Right cardiac atrium (tissue), 5 donors: ENCODE measurements at regions of chr12 and their contacts with region 1.

Region 1: GRCh38 chr12:92561543-92561899 is 141.3 kb upstream of the PLEKHG7 start:
- DNase-seq: peak in 1 of 3 donors; percentile 38
- ATAC-seq: peak; percentile 85 to 90
- H3K4me3 ChIP-seq: no peak overlapping the region
- H3K27ac ChIP-seq: no peak overlapping the region
- H3K4me1 ChIP-seq: peaks cover 2% of the 10 kb centered on the region
- H3K27me3 ChIP-seq: no peaks in the 10 kb centered on the region

Region 2: GRCh38 chr12:91577586-91578539 is 983.7 kb before region 1 on chr12:
- intact Hi-C with region 1: loop called in 1 of 4 experiments (anchors 10 kb)
- DNase-seq: no peak
- ATAC-seq: peak; percentile 33 to 57
- H3K4me3 ChIP-seq: peak overlapping the region; percentile 36
- H3K27ac ChIP-seq: no peak overlapping the region
- H3K4me1 ChIP-seq: no peaks in the 10 kb centered on the region
- H3K27me3 ChIP-seq: no peaks in the 10 kb centered on the region

Region 3: GRCh38 chr12:92253301-92253700 is 308.2 kb before region 1 on chr12:
- intact Hi-C with region 1: no loop called
- DNase-seq: no peak
- ATAC-seq: no peak
- H3K4me3 ChIP-seq: no peak overlapping the region
- H3K27ac ChIP-seq: no peak overlapping the region
- H3K4me1 ChIP-seq: no peaks in the 10 kb centered on the region
- H3K27me3 ChIP-seq: no peaks in the 10 kb centered on the region

Region 4: GRCh38 chr12:92414170-92415070 is 147.1 kb before region 1 on chr12:
- intact Hi-C with region 1: loop called in 3 of 4 experiments (anchors 10 kb)
- DNase-seq: no peak
- ATAC-seq: no peak
- H3K4me3 ChIP-seq: no peak overlapping the region
- H3K27ac ChIP-seq: no peak overlapping the region
- H3K4me1 ChIP-seq: peaks cover 5% of the 10 kb centered on the region
- H3K27me3 ChIP-seq: no peaks in the 10 kb centered on the region

Region 5: DNA sequence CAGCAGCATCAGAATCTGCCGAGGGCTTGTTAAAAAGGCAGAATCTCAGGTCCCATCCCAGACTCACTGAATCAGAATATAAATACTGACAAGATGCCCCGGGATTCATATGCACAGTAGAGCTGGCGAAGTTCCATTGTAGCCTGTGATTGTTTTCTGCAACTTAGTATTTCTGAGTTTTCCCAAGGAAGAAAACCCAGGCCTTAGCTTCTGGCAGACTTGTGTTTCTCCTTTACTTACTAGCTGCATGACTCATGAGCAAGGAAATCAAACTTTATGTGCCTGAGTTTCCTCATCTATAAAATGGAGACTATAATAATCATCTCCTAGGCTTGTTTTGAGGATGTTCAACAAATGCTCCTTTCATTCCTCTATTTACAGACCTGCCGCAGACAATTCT is 137.2 kb before region 1 on chr12:
- intact Hi-C with region 1: loop called (anchors 10 kb)
- DNase-seq: no peak
- ATAC-seq: no peak
- H3K4me3 ChIP-seq: no peak overlapping the region
- H3K27ac ChIP-seq: no peak overlapping the region
- H3K4me1 ChIP-seq: peaks cover 2% of the 10 kb centered on the region
- H3K27me3 ChIP-seq: no peaks in the 10 kb centered on the region

Region 6: GRCh38 chr12:92505254-92506231 is 56.0 kb before region 1 on chr12:
- intact Hi-C with region 1: loop called (anchors 10 kb)
- DNase-seq: peak; percentile 73 to 84 (median 83)
- ATAC-seq: peak; percentile 81 to 83
- H3K4me3 ChIP-seq: peak overlapping the region; percentile 18
- H3K27ac ChIP-seq: peak overlapping the region; percentile 80
- H3K4me1 ChIP-seq: peaks cover 14% of the 10 kb centered on the region
- H3K27me3 ChIP-seq: no peaks in the 10 kb centered on the region

Region 7: GRCh38 chr12:92779902-92780301 is 218.4 kb after region 1 on chr12:
- intact Hi-C with region 1: no loop called
- DNase-seq: no peak
- ATAC-seq: no peak
- H3K4me3 ChIP-seq: no peak overlapping the region
- H3K27ac ChIP-seq: no peak overlapping the region
- H3K4me1 ChIP-seq: peaks cover 1% of the 10 kb centered on the region
- H3K27me3 ChIP-seq: no peaks in the 10 kb centered on the region